Activated CD8-positive, alpha-beta T cell treated with anti-CD3 and anti-CD28 coated beads, Interleukin-2, amount 10 ng/mL, durations not matched to agents 7 days and 5 days (primary cell): ENCODE measurements at regions of chr16 and their contacts with region 1.

Region 1: GRCh38 chr16:9008601-9009260 is 45.0 kb upstream of the USP7 start:
- DNase-seq: peak; percentile 77
- ATAC-seq: peak; percentile 99
- H3K4me3 Mint-ChIP-seq: no peak overlapping the region
- H3K27ac Mint-ChIP-seq: no peak overlapping the region
- H3K4me1 Mint-ChIP-seq: peaks cover 4% of the 10 kb centered on the region
- H3K27me3 Mint-ChIP-seq: peaks cover 16% of the 10 kb centered on the region

Region 2: DNA sequence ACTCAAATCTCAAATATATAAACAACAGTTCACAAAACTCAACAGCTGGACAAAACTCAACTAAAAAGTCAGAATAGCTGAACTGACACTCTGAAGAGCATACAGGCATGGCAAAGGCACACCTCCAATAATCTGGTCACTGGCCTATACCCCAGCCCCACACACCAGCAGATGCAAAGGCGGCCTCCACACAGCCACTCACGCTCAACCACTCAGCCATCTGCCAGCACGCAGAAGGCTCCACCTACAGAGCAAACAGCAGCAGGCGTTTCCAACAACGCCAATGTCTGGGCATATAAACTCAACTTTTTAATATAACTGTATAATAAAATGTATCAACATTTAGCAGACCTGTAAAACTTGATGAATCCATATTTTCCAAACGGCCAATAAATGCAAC is 62.2 kb before region 1 on chr16:
- CTCF ChIA-PET with region 1: interaction called, 24 read pairs
- POLR2A ChIA-PET with region 1: no interaction called
- DNase-seq: no peak
- ATAC-seq: no peak
- H3K4me3 Mint-ChIP-seq: no peak overlapping the region
- H3K27ac Mint-ChIP-seq: no peak overlapping the region
- H3K4me1 Mint-ChIP-seq: peaks cover 83% of the 10 kb centered on the region
- H3K27me3 Mint-ChIP-seq: no peaks in the 10 kb centered on the region

Region 3: DNA sequence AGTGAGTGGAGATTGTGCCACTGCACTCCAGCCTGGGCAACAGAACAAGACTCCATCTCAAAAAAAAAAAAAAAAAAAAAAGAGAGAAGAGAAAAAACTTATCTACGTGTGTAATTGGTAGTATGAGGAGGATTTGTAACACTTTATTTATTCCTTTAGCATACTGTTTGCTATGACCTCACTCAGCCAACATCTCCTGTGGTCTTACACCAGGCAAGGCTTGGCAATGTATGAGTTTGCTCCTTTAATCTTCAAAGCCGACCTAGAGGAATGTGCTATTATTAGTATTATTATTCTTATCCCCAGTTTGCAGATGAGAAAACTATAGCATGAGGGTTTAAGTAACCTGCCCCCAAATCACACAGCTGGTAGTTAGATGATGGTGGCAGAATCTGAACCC is 46.9 kb after region 1 on chr16:
- CTCF ChIA-PET with region 1: no interaction called
- POLR2A ChIA-PET with region 1: no interaction called
- DNase-seq: no peak
- ATAC-seq: no peak
- H3K4me3 Mint-ChIP-seq: no peak overlapping the region
- H3K27ac Mint-ChIP-seq: no peak overlapping the region
- H3K4me1 Mint-ChIP-seq: peaks cover 3% of the 10 kb centered on the region
- H3K27me3 Mint-ChIP-seq: no peaks in the 10 kb centered on the region